PC-9 (cell line): ENCODE measurements at regions of chr6 and their contacts with region 1.

Region 1: DNA sequence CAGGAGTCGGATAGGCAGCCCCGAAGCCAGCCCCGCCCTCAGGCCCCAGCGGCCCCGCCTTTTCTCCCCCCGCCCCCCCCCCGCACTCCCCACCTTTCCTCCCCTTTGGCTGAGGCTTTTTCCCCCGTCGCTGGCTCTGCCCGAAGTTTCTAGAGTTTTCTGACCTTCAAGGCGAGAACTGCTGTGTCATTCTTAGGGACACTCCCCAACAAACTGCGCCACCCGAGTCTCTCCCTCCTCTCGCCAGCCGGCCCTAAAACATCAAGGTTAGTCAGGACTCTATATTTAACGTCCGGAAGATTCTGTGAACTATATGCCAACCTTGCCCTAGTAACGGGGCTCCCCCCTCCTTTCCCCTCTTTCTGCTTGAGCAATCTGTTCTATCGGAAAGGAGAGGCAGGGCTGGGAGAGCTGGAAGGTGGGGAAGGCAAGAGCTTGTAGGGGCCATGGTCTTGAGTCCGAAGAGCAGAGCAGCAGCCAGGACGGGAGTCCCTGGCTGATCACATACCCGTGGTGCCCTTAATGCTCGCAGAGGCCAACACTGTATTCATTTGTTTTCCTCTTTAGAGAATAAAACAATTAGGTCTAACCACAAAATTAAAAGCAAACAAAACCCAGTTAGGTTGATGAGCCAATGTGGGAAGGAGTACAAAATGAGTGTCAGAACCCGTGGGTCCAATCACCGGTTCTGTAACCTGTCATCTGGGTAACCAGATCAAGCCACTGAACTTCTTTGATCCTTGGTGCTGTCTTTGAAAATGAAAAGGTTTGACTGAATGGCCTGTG is 5.3 kb upstream of the HSPA1B start:
- DNase-seq: peak; percentile 87 to 96
- H3K4me3 ChIP-seq: peak overlapping the region; percentile 81
- H3K27ac ChIP-seq: peak overlapping the region; percentile 98
- H3K4me1 ChIP-seq: peaks cover 72% of the 10 kb centered on the region
- H3K27me3 ChIP-seq: no peaks in the 10 kb centered on the region
- CTCF ChIP-seq: no peak

Region 2: GRCh38 chr6:31304683-31305082 is 517.5 kb before region 1 on chr6:
- CTCF ChIA-PET with region 1: no interaction called
- POLR2A ChIA-PET with region 1: interaction called, 12 read pairs
- intact Hi-C with region 1: no loop called
- DNase-seq: no peak
- H3K4me3 ChIP-seq: no peak overlapping the region
- H3K27ac ChIP-seq: no peak overlapping the region
- H3K4me1 ChIP-seq: no peaks in the 10 kb centered on the region
- H3K27me3 ChIP-seq: peaks cover 39% of the 10 kb centered on the region
- CTCF ChIP-seq: no peak

Region 3: DNA sequence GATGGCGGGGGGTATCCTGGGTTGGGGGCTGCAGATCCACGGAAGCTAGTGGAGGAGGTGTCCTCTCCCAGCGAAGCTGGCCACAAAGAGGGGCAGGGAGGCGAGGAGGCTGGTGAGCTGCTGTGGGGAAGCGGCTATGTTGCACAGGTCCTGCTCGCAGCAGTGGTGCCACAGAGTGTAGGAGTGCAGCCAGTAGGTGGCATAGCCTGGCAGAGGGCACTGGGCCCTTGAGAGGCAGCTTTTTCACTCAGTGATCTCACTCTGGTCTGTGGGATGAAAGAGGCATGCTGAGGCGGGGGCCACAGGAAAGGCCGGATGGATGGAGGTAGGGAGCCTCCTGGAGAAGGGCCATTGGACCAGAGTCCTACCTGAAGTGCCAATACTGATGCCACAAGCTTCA is 109.9 kb before region 1 on chr6:
- CTCF ChIA-PET with region 1: no interaction called
- POLR2A ChIA-PET with region 1: interaction called, 14 read pairs
- intact Hi-C with region 1: no loop called
- DNase-seq: no peak
- H3K4me3 ChIP-seq: no peak overlapping the region
- H3K27ac ChIP-seq: no peak overlapping the region
- H3K4me1 ChIP-seq: peaks cover 2% of the 10 kb centered on the region
- H3K27me3 ChIP-seq: no peaks in the 10 kb centered on the region
- CTCF ChIP-seq: peak; percentile 33; the same call in 1 of the 2 replicates

Region 4: GRCh38 chr6:31729515-31729978 is 92.7 kb before region 1 on chr6:
- CTCF ChIA-PET with region 1: no interaction called
- POLR2A ChIA-PET with region 1: no interaction called
- intact Hi-C with region 1: no loop called
- DNase-seq: peak; percentile 78 to 91
- H3K4me3 ChIP-seq: peak overlapping the region; percentile 81
- H3K27ac ChIP-seq: no peak overlapping the region
- H3K4me1 ChIP-seq: peaks cover 15% of the 10 kb centered on the region
- H3K27me3 ChIP-seq: no peaks in the 10 kb centered on the region
- CTCF ChIP-seq: peak; percentile 6; the same call in 1 of the 2 replicates

Region 5: DNA sequence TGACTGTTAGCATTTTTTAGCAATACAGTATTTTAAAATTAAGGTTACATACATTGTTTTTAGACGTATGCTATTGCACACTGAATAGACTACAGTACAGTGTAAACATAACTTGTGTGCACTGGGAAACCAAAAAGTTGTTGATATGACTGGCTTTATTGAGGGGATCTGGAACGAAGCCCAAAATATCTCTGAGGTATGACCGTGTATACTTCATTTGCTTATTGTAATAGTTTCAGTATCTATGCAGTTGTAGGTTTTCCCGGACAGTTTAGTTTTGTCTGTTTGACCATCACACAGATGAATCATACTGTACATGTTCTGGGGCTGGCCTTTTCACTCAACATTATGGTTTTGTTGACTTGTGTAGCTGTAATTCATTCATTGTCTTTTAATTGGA is 86.6 kb after region 1 on chr6:
- CTCF ChIA-PET with region 1: no interaction called
- POLR2A ChIA-PET with region 1: no interaction called
- intact Hi-C with region 1: no loop called
- DNase-seq: no peak
- H3K4me3 ChIP-seq: no peak overlapping the region
- H3K27ac ChIP-seq: no peak overlapping the region
- H3K4me1 ChIP-seq: peaks cover 23% of the 10 kb centered on the region; the same call in 1 of the 2 replicates
- H3K27me3 ChIP-seq: no peaks in the 10 kb centered on the region
- CTCF ChIP-seq: no peak